Sigmoid colon (tissue), 7 donors: ENCODE measurements at regions of chr1 and their contacts with region 1.

Region 1: DNA sequence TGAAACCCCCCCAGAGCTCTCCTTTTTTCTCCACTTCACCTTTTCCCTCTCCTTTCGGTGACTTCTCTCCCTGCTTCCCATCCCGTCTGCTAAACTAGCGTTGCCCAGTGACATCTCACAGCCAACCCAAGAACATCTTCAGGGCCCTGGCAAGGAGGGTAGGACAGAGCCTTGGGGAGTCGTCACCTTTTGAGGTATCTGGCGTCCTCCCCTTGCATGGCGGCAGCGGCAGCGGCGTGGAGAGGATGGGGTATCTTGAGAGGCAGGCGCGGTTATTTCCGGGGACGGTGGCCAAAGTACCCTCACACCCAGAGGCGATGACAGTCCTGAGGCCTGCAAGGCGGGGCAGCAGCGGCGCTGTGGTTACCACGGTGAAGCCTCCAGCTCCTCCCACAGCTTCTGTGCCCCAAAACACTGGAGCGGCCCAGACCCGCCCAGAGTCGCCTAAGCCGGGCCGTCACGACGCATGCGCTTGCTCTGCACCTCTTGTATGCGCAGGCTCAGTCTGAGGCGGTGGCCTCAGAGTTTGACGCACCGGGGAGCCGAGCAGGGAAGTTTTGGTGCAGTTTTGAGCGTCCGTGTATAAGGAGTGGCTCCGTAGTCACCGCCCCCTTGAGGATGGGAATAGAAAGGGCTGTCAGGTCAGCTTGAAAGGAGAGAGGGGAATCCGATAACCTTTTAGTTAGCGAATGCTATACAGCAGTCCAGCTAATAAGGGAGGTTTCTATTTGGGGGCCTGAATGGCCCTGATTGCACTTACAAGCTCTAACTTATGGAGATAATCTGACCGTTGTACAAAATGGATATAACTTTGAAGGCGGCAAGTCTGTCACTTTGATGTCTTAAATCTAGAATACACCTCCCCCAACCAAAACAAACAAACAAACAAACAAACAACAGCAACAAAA is at the start of gene KIFAP3:
- DNase-seq: peak; percentile 99
- H3K4me3 ChIP-seq: peak within 1 kb of the TSS; percentile 56 to 80 (median 70)
- H3K27ac ChIP-seq: peak within 1 kb of the TSS; percentile 81 to 88 (median 86)
- H3K4me1 ChIP-seq: peaks cover 0 to 25% (median 19%) of the 10 kb centered on the region in 4 donors
- H3K27me3 ChIP-seq: no peaks in the 10 kb centered on the region
- CTCF ChIP-seq: peak; percentile 23 to 55 (median 34)
- EP300 ChIP-seq: peak in 1 of 4 donors; percentile 42
- POLR2A ChIP-seq: peak; percentile 49 to 59
- total RNA-seq, gene KIFAP3: 28.1 to 36.7 (median 33.4) TPM

Region 2: GRCh38 chr1:169893494-169894362 is 180.8 kb before region 1 on chr1 and contains the start of gene SCYL3:
- intact Hi-C with region 1: loop called (anchors 5 kb)
- DNase-seq: peak; percentile 98
- H3K4me3 ChIP-seq: peak within 1 kb of the TSS; percentile 83 to 96 (median 86)
- H3K27ac ChIP-seq: peak within 1 kb of the TSS; percentile 94 to 99 (median 97)
- H3K4me1 ChIP-seq: peaks cover 0 to 22% (median 17%) of the 10 kb centered on the region in 4 donors
- H3K27me3 ChIP-seq: no peaks in the 10 kb centered on the region
- CTCF ChIP-seq: no peak
- EP300 ChIP-seq: peak in 2 of 4 donors; percentile 25 to 44
- POLR2A ChIP-seq: peak; percentile 7 to 17
- total RNA-seq, gene SCYL3: 9.6 to 13.3 (median 12.8) TPM

Region 3: DNA sequence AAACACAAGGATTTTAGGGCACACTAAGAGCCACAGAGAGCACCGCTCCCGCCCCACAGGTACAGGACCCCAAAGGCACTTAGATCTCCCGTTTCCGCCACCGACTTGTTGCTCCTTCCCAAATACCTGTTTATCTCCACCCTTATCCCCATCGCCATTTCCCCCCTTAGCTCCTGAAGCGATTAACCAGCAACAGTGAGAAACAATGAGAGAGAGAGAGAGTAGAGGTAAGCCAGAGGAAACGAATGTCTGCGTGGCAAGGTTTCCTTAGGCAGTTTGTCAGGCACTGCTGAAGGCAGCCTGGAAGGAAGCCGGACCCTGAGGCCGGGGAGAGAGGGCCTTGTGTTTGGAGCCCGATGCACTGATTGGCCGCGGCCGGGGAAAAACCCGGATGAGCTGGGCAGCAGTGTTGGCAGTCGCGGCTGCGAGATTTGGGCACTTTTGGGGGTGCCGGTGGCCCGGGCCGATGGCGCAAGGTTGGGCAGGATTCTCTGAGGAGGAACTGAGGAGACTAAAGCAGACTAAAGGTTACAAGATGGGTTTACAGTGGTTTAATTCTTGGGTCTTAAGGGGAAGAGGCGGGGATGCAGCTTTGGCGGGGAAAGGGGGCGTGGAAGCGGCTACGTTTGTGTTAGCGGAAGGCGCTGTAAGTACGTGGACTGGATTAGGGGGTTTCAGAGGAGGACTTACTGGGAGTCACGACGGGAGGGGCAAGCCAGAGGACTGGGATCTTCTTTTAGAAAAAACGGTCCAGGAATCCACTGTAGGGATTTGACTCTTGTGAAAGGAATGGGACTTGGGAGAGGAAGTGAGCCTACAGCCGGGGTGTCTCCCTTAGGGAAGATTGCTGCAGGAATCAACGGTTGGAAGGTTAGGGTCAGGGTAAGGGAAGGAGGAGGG is 457.5 kb after region 1 on chr1 and contains the start of gene GORAB:
- intact Hi-C with region 1: loop called (anchors 10 kb)
- DNase-seq: peak; percentile 95
- H3K4me3 ChIP-seq: peak within 1 kb of the TSS; percentile 55 to 63 (median 57)
- H3K27ac ChIP-seq: peak within 1 kb of the TSS; percentile 79 to 90 (median 82)
- H3K4me1 ChIP-seq: peaks cover 0 to 17% (median 12%) of the 10 kb centered on the region in 4 donors
- H3K27me3 ChIP-seq: no peaks in the 10 kb centered on the region
- CTCF ChIP-seq: no peak
- EP300 ChIP-seq: no peak
- POLR2A ChIP-seq: peak; percentile 49 to 62
- total RNA-seq, gene GORAB: 4.8 to 13.8 (median 7.1) TPM